Activated naive CD4-positive, alpha-beta T cell treated with anti-CD3 and anti-CD28 coated beads for 36 hours (primary cell): ENCODE measurements at regions of chr2 and their contacts with region 1.

Region 1: GRCh38 chr2:44044281-44044720 is 48.5 kb upstream of the LRPPRC start:
- DNase-seq: peak; percentile 93
- H3K4me3 Mint-ChIP-seq: no peak overlapping the region
- H3K27ac Mint-ChIP-seq: no peak overlapping the region
- H3K4me1 Mint-ChIP-seq: no peaks in the 10 kb centered on the region
- H3K27me3 Mint-ChIP-seq: no peaks in the 10 kb centered on the region

Region 2: DNA sequence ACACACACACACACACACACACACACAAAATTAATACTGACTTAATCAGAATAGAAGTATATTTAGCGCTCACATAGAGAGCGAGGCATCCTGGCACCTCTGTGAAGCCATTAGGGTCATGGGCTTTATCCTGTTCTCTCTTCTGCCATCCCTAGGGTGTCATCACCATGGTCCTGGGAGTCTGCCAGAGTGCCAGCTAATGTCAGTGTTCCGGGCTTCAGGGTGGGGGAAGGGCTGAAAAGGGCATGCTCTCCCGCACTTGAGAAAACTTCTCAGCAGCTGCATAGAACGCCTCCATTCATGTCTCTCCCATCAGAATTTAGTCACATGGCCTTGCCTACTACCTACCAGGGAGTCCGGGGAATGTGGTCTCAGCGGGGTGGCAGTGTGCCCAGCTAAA is 290.1 kb before region 1 on chr2:
- CTCF ChIA-PET with region 1: no interaction called
- intact Hi-C with region 1: no loop called
- DNase-seq: no peak
- H3K4me3 Mint-ChIP-seq: no peak overlapping the region
- H3K27ac Mint-ChIP-seq: no peak overlapping the region
- H3K4me1 Mint-ChIP-seq: no peaks in the 10 kb centered on the region
- H3K27me3 Mint-ChIP-seq: no peaks in the 10 kb centered on the region

Region 3: GRCh38 chr2:43995733-43996533 is 48.4 kb before region 1 on chr2 and contains the start of gene LRPPRC:
- CTCF ChIA-PET with region 1: interaction called, 3 read pairs
- intact Hi-C with region 1: loop called (anchors 1 kb)
- DNase-seq: peak; percentile 95
- H3K4me3 Mint-ChIP-seq: peak within 1 kb of the TSS; percentile 89
- H3K27ac Mint-ChIP-seq: peak within 1 kb of the TSS; percentile 93
- H3K4me1 Mint-ChIP-seq: peaks cover 36% of the 10 kb centered on the region
- H3K27me3 Mint-ChIP-seq: no peaks in the 10 kb centered on the region
- total RNA-seq, gene LRPPRC: 170 to 175 TPM

Region 4: DNA sequence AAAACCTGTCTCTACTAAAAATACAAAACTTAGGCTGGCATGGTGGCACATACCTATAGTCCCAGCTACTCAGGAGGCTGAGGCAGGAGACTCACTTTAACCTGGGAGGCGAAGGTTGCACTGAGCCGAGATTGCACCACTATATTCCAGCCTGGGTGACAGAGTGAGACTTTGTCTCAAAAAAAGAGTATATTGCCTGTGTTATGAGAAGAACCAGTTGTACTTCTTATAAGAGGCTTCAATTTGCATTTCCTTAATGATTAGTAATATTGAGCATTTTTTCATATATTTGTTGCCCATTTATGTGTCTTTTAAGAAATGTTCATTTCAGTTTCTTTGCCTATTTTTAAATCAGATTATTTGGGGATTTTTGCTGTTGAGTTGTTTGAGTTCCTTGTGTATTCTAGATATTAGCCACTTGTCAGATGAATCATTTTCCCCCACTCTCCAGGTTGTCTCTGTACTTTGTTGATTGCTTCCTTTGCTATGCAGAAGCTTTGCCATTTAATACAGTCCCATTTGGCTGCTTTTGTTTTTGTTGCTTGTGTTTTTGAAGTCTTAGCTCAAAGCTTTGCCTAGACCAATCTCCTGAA is 27.2 kb after region 1 on chr2:
- CTCF ChIA-PET with region 1: interaction called, 12 read pairs
- intact Hi-C with region 1: no loop called
- DNase-seq: no peak
- H3K4me3 Mint-ChIP-seq: no peak overlapping the region
- H3K27ac Mint-ChIP-seq: no peak overlapping the region
- H3K4me1 Mint-ChIP-seq: peaks cover 3% of the 10 kb centered on the region
- H3K27me3 Mint-ChIP-seq: peaks cover 2% of the 10 kb centered on the region

Region 5: GRCh38 chr2:44244129-44244871 is 200.0 kb after region 1 on chr2:
- CTCF ChIA-PET with region 1: interaction called, 3 read pairs
- intact Hi-C with region 1: loop called (anchors 1 kb)
- DNase-seq: peak; percentile 69
- H3K4me3 Mint-ChIP-seq: peak overlapping the region; percentile 71
- H3K27ac Mint-ChIP-seq: no peak overlapping the region
- H3K4me1 Mint-ChIP-seq: peaks cover 21% of the 10 kb centered on the region
- H3K27me3 Mint-ChIP-seq: no peaks in the 10 kb centered on the region

Region 6: DNA sequence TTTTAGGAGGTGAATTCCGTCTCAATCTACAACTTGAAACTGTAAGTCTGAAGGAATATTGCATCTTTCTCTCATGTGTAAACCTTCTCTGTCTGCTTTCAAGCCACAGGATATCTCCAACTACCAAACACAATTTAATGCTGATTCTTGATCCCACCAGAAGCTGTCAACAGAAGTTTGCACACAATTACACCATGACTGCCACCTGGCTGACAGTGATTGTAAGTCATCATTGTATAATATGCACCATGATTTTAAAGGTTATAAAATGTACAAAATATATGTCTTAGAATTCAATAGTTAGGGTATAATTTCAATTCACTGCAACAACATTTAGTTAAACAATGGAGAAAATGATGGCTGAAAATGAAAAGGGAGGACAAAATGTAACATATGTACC is 298.6 kb after region 1 on chr2:
- CTCF ChIA-PET with region 1: interaction called, 7 read pairs
- intact Hi-C with region 1: loop called (anchors 2 kb)
- DNase-seq: peak; percentile 30
- H3K4me3 Mint-ChIP-seq: no peak overlapping the region
- H3K27ac Mint-ChIP-seq: no peak overlapping the region
- H3K4me1 Mint-ChIP-seq: no peaks in the 10 kb centered on the region
- H3K27me3 Mint-ChIP-seq: no peaks in the 10 kb centered on the region

Region 7: GRCh38 chr2:44825702-44826101 is 781.4 kb after region 1 on chr2:
- CTCF ChIA-PET with region 1: no interaction called
- intact Hi-C with region 1: no loop called
- DNase-seq: no peak
- H3K4me3 Mint-ChIP-seq: no peak overlapping the region
- H3K27ac Mint-ChIP-seq: no peak overlapping the region
- H3K4me1 Mint-ChIP-seq: no peaks in the 10 kb centered on the region
- H3K27me3 Mint-ChIP-seq: peaks cover 7% of the 10 kb centered on the region

Region 8: DNA sequence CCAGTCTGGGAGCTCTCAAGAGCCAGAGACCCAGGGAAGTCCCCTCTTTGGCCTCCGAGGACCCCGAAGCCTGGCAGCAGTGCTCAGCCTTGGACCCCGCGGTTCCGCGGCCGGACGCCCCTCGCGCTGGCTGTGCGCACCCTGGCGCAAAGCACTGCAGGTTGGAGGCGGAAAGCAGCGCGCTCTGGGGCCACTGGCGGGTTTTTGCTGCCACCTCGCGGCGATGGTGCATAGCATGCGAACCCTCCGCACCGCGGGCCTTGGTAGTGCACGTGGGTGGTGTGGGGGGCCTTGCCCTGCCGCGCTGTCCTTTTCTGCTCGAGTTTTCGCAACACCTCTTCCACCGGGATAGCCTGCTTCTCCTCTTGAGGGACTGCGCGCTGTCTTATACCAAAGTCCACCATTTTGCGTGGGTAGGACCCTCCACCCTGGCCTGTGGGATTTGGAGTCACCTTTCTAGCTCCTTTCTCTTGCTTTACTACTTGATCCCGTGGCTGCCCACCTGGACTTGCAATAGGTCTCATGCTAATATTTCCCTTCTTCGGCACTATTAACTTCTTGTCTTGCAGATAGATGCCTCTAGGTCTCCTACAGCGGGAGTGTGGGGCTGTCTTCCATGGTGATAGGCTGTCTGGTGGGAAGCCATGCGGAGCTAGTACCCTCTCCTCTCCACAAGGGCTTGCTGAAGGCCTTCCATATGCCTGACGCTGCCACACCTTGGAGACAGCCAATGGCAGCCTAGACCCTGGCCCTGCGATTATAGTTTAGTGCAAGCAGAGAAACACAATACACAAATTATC is 911.5 kb after region 1 on chr2:
- CTCF ChIA-PET with region 1: interaction called, 4 read pairs
- intact Hi-C with region 1: loop called (anchors 1 kb)
- DNase-seq: peak; percentile 87
- H3K4me3 Mint-ChIP-seq: no peak overlapping the region
- H3K27ac Mint-ChIP-seq: no peak overlapping the region
- H3K4me1 Mint-ChIP-seq: peaks cover 18% of the 10 kb centered on the region
- H3K27me3 Mint-ChIP-seq: peaks cover 54% of the 10 kb centered on the region